ENCODE measurements at regions of chr2 and their contacts with region 1.

Region 1: DNA sequence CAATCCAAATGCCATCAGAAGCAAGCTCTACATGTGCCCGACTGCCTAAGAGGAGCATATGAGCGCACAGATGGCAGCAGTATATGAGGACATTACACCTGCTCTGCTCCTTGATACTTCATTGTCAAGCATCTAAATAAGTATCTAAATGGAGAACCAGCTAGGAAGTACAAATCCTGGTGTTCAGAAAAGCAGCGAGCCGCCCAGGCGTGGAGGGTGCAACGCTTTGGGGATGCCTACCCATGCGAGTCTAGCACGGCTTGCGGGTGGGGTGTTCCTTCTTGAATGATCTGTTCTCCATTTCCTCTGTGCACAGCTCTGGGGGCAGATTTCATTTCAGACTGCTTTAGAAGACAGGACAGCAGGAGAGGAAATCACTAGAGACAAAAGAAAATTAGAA is 63.0 kb upstream of the BCL2L11 start:
- DNase-seq: no peak
- ATAC-seq: no peak
- H3K4me3 ChIP-seq: no peak overlapping the region
- H3K27ac ChIP-seq: no peak overlapping the region
- H3K4me1 ChIP-seq: no peaks in the 10 kb centered on the region
- H3K27me3 ChIP-seq: peaks cover 3 to 29% of the 10 kb centered on the region in 2 experiments; a peak in 4 of 5 replicates
- CTCF ChIP-seq: no peak
- EP300 ChIP-seq: no peak
- POLR2A ChIP-seq: no peak
- RAD21 ChIP-seq: no peak

Region 2: GRCh38 chr2:110777531-110778311 is 280.0 kb before region 1 on chr2:
- CTCF ChIA-PET with region 1: no interaction called
- POLR2A ChIA-PET with region 1: no interaction called
- in situ Hi-C with region 1: no loop called
- intact Hi-C with region 1: no loop called
- DNase-seq: no peak
- ATAC-seq: no peak
- H3K4me3 ChIP-seq: no peak overlapping the region
- H3K27ac ChIP-seq: no peak overlapping the region
- H3K4me1 ChIP-seq: no peaks in the 10 kb centered on the region
- H3K27me3 ChIP-seq: peaks cover 9 to 28% of the 10 kb centered on the region in 2 experiments; a peak in 4 of 5 replicates
- CTCF ChIP-seq: no peak
- EP300 ChIP-seq: no peak
- POLR2A ChIP-seq: no peak
- RAD21 ChIP-seq: no peak

Region 3: DNA sequence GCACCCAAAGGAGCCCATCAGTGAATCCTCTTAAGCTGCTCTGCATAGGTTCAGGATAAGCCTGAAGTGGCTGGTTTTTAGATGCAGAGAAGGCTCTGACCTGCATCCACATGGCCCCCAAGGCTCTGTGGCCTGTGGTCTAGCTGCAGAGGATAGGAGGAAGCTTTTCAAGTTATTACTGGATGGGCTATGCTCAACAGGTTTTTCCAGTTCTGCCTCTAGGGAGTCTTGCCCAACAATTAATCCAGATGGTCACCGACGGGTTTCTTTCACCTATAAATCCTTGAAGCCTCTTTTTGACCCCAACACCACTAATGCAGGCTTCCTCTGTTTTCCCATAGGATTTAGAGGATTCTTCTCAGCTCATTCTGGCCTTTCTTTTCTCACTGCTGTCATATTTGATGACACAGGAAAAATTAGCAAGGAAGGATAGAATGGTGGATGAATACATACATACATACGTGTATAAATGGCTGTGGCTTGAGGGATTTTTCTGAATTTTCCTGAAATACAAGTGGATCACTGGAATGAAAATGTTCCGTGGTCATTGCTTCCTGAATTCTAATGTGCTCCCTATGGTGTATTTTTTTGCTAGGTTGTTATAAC is 10.8 kb after region 1 on chr2:
- CTCF ChIA-PET with region 1: no interaction called
- POLR2A ChIA-PET with region 1: interaction called, 10 read pairs
- in situ Hi-C with region 1: no loop called
- intact Hi-C with region 1: no loop called
- DNase-seq: no peak
- ATAC-seq: no peak; the same call in 2 of the 3 replicates
- H3K4me3 ChIP-seq: no peak overlapping the region
- H3K27ac ChIP-seq: no peak overlapping the region
- H3K4me1 ChIP-seq: no peaks in the 10 kb centered on the region
- H3K27me3 ChIP-seq: peaks cover 4 to 5% of the 10 kb centered on the region in 2 experiments; a peak in 3 of 5 replicates
- CTCF ChIP-seq: no peak
- EP300 ChIP-seq: no peak
- POLR2A ChIP-seq: no peak
- RAD21 ChIP-seq: no peak